CD14-positive monocyte (primary cell): ENCODE measurements at regions of chr1 and their contacts with region 1.

Region 1: GRCh38 chr1:175319418-175320230 is 127.0 kb upstream of the KIAA0040 start:
- DNase-seq: peak; percentile 47 to 67 (median 63)
- H3K4me3 ChIP-seq: no peak overlapping the region
- H3K4me3 Mint-ChIP-seq: peak overlapping the region in 1 of 2 donors; percentile 36
- H3K27ac ChIP-seq: no peak overlapping the region
- H3K27ac Mint-ChIP-seq: no peak overlapping the region
- H3K4me1 ChIP-seq: peaks cover 4 to 6% of the 10 kb centered on the region in 2 donors
- H3K4me1 Mint-ChIP-seq: peaks cover 9% of the 10 kb centered on the region
- H3K27me3 ChIP-seq: no peaks in the 10 kb centered on the region
- H3K27me3 Mint-ChIP-seq: peaks cover 0 to 3% (median 2%) of the 10 kb centered on the region in 3 donors
- CTCF ChIP-seq: peak; percentile 87

Region 2: GRCh38 chr1:175129997-175130648 is 189.5 kb before region 1 on chr1:
- intact Hi-C with region 1: no loop called
- DNase-seq: no peak
- H3K4me3 ChIP-seq: no peak overlapping the region
- H3K4me3 Mint-ChIP-seq: no peak overlapping the region
- H3K27ac ChIP-seq: no peak overlapping the region
- H3K27ac Mint-ChIP-seq: peak overlapping the region in 1 of 7 donors; percentile 69
- H3K4me1 ChIP-seq: peaks cover 31 to 39% of the 10 kb centered on the region in 2 donors
- H3K4me1 Mint-ChIP-seq: peaks cover 38% of the 10 kb centered on the region
- H3K27me3 ChIP-seq: no peaks in the 10 kb centered on the region
- H3K27me3 Mint-ChIP-seq: peaks cover 0 to 1% (median 0%) of the 10 kb centered on the region in 3 donors
- CTCF ChIP-seq: no peak

Region 3: GRCh38 chr1:175152037-175152652 is 167.5 kb before region 1 on chr1:
- intact Hi-C with region 1: loop called (anchors 1 to 2 kb)
- DNase-seq: peak; percentile 36 to 61 (median 54)
- H3K4me3 ChIP-seq: no peak overlapping the region
- H3K4me3 Mint-ChIP-seq: peak overlapping the region in 1 of 2 donors; percentile 60
- H3K27ac ChIP-seq: no peak overlapping the region
- H3K27ac Mint-ChIP-seq: peak overlapping the region in 2 of 7 donors; percentile 14 to 19
- H3K4me1 ChIP-seq: peaks cover 3 to 4% of the 10 kb centered on the region in 2 donors
- H3K4me1 Mint-ChIP-seq: peaks cover 16% of the 10 kb centered on the region
- H3K27me3 ChIP-seq: no peaks in the 10 kb centered on the region
- H3K27me3 Mint-ChIP-seq: peaks cover 17 to 29% (median 21%) of the 10 kb centered on the region in 3 donors
- CTCF ChIP-seq: peak; percentile 88

Region 4: GRCh38 chr1:175373786-175374623 is 54.4 kb after region 1 on chr1:
- intact Hi-C with region 1: no loop called
- DNase-seq: no peak
- H3K4me3 ChIP-seq: no peak overlapping the region
- H3K4me3 Mint-ChIP-seq: no peak overlapping the region
- H3K27ac ChIP-seq: no peak overlapping the region
- H3K27ac Mint-ChIP-seq: peak overlapping the region in 1 of 7 donors; percentile 14
- H3K4me1 ChIP-seq: no peaks in the 10 kb centered on the region
- H3K4me1 Mint-ChIP-seq: no peaks in the 10 kb centered on the region
- H3K27me3 ChIP-seq: no peaks in the 10 kb centered on the region
- H3K27me3 Mint-ChIP-seq: peaks cover 0 to 9% (median 0%) of the 10 kb centered on the region in 3 donors
- CTCF ChIP-seq: peak; percentile 60

Region 5: GRCh38 chr1:175390081-175390481 is 70.5 kb after region 1 on chr1:
- intact Hi-C with region 1: no loop called
- DNase-seq: no peak
- H3K4me3 ChIP-seq: no peak overlapping the region
- H3K4me3 Mint-ChIP-seq: no peak overlapping the region
- H3K27ac ChIP-seq: no peak overlapping the region
- H3K27ac Mint-ChIP-seq: no peak overlapping the region
- H3K4me1 ChIP-seq: no peaks in the 10 kb centered on the region
- H3K4me1 Mint-ChIP-seq: no peaks in the 10 kb centered on the region
- H3K27me3 ChIP-seq: no peaks in the 10 kb centered on the region
- H3K27me3 Mint-ChIP-seq: peaks cover 5 to 8% (median 6%) of the 10 kb centered on the region in 3 donors
- CTCF ChIP-seq: no peak

Region 6: GRCh38 chr1:175665616-175666015 is 346.0 kb after region 1 on chr1:
- intact Hi-C with region 1: no loop called
- DNase-seq: no peak
- H3K4me3 ChIP-seq: no peak overlapping the region
- H3K4me3 Mint-ChIP-seq: no peak overlapping the region
- H3K27ac ChIP-seq: no peak overlapping the region
- H3K27ac Mint-ChIP-seq: no peak overlapping the region
- H3K4me1 ChIP-seq: no peaks in the 10 kb centered on the region
- H3K4me1 Mint-ChIP-seq: no peaks in the 10 kb centered on the region
- H3K27me3 ChIP-seq: no peaks in the 10 kb centered on the region
- H3K27me3 Mint-ChIP-seq: peaks cover 0 to 7% (median 4%) of the 10 kb centered on the region in 3 donors
- CTCF ChIP-seq: no peak